Keratinocyte (primary cell): ENCODE measurements at regions of chr12 and their contacts with region 1.

Region 1: DNA sequence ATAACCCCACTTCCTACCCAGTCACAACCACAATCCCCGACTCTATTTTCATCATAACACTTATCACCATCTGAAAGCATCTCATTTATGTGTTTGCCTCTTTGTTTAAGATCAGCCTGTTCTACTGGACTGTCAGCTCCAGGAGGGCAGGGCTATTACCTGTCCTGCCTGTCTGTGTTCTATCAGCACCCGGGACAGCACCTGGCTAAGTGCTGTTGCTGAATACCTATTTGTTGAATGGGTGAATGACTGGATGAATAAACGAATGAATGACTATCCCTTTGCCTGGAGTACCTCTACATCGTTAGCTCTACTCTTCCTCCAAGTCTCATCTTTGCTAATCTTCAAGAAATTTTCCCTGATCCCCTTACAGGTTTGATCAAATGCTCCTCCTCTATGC is 69.0 kb downstream of the WSCD2 start:
- DNase-seq: no peak
- H3K4me3 ChIP-seq: no peak overlapping the region
- H3K27ac ChIP-seq: no peak overlapping the region
- H3K4me1 ChIP-seq: no peaks in the 10 kb centered on the region
- H3K27me3 ChIP-seq: no peaks in the 10 kb centered on the region
- CTCF ChIP-seq: no peak

Region 2: DNA sequence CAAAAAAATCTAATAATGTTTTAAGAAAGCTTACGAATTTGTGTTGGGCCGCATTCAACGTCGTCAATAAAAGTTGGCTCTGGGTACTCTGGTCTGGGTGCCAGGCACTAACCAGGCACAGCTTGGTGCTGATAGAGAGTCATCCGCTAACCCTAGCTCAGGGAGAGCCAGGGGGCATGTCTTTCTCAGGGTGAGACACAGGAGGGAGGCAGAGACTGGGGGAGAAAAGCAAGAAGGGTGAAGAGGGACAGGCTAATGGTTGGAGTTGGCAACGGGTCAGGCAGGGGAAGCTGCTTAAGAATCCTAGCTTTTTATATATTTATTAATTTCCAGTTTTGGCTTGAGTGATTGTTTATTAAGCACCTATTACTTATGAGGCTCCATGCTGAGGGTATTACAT is 36.1 kb after region 1 on chr12:
- dilution Hi-C with region 1: loop called (anchors 5 kb)
- DNase-seq: no peak
- H3K4me3 ChIP-seq: no peak overlapping the region
- H3K27ac ChIP-seq: no peak overlapping the region
- H3K4me1 ChIP-seq: no peaks in the 10 kb centered on the region
- H3K27me3 ChIP-seq: peaks cover 5% of the 10 kb centered on the region
- CTCF ChIP-seq: peak in 2 of 3 experiments; percentile 7 to 22

Region 3: GRCh38 chr12:108270035-108270848 is 72.2 kb after region 1 on chr12:
- dilution Hi-C with region 1: no loop called
- DNase-seq: no peak
- H3K4me3 ChIP-seq: no peak overlapping the region
- H3K27ac ChIP-seq: no peak overlapping the region
- H3K4me1 ChIP-seq: no peaks in the 10 kb centered on the region
- H3K27me3 ChIP-seq: no peaks in the 10 kb centered on the region
- CTCF ChIP-seq: no peak